CD8-positive, alpha-beta memory T cell (primary cell): ENCODE measurements at regions of chr1 and their contacts with region 1.

Region 1: GRCh38 chr1:181033799-181034451 is at the start of gene MR1:
- DNase-seq: peak; percentile 2 to 87 (median 66)
- H3K4me3 ChIP-seq: peak within 1 kb of the TSS; percentile 81
- H3K4me3 Mint-ChIP-seq: peak within 1 kb of the TSS; percentile 90 to 99 (median 97)
- H3K27ac ChIP-seq: peak within 1 kb of the TSS; percentile 87
- H3K27ac Mint-ChIP-seq: peak within 1 kb of the TSS; percentile 97 to 100 (median 99)
- H3K4me1 ChIP-seq: peaks cover 53% of the 10 kb centered on the region
- H3K4me1 Mint-ChIP-seq: peaks cover 50 to 65% (median 65%) of the 10 kb centered on the region in 3 donors
- H3K27me3 ChIP-seq: no peaks in the 10 kb centered on the region
- H3K27me3 Mint-ChIP-seq: no peaks in the 10 kb centered on the region
- total RNA-seq, gene MR1: 13.8 to 16.4 TPM

Region 2: DNA sequence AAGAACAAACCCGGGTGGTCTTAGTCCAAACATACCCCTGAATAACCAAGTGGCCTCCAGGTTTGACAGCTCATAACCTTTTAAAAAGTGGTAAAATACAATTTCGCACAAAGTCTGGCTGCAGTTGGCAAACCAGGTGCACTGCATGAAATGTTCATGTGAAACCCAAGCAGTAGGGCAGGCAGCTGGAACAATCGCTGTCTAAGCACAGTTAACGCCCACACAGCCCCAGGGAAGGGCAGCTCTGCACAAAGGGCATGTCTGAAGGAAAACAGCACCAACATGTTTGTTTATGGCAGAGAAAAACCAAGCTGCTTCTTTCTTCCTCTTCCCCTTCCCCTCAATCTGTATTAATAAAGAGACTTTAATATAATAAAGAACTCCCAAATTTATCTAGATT is 71.7 kb before region 1 on chr1:
- CTCF ChIA-PET with region 1: no interaction called
- POLR2A ChIA-PET with region 1: no interaction called
- DNase-seq: no peak
- H3K4me3 ChIP-seq: no peak overlapping the region
- H3K4me3 Mint-ChIP-seq: no peak overlapping the region
- H3K27ac ChIP-seq: no peak overlapping the region
- H3K27ac Mint-ChIP-seq: no peak overlapping the region
- H3K4me1 ChIP-seq: no peaks in the 10 kb centered on the region
- H3K4me1 Mint-ChIP-seq: peaks cover 0 to 6% (median 0%) of the 10 kb centered on the region in 3 donors
- H3K27me3 ChIP-seq: no peaks in the 10 kb centered on the region
- H3K27me3 Mint-ChIP-seq: peaks cover 0 to 1% of the 10 kb centered on the region in 2 donors

Region 3: GRCh38 chr1:180975551-180975950 is 58.4 kb before region 1 on chr1:
- CTCF ChIA-PET with region 1: no interaction called
- POLR2A ChIA-PET with region 1: no interaction called
- DNase-seq: no peak
- H3K4me3 ChIP-seq: no peak overlapping the region
- H3K4me3 Mint-ChIP-seq: peak overlapping the region in 1 of 7 donors; percentile 12
- H3K27ac ChIP-seq: no peak overlapping the region
- H3K27ac Mint-ChIP-seq: peak overlapping the region in 6 of 8 donors; percentile 30 to 64 (median 40)
- H3K4me1 ChIP-seq: peaks cover 10% of the 10 kb centered on the region
- H3K4me1 Mint-ChIP-seq: peaks cover 32 to 48% (median 39%) of the 10 kb centered on the region in 3 donors
- H3K27me3 ChIP-seq: no peaks in the 10 kb centered on the region
- H3K27me3 Mint-ChIP-seq: no peaks in the 10 kb centered on the region

Region 4: DNA sequence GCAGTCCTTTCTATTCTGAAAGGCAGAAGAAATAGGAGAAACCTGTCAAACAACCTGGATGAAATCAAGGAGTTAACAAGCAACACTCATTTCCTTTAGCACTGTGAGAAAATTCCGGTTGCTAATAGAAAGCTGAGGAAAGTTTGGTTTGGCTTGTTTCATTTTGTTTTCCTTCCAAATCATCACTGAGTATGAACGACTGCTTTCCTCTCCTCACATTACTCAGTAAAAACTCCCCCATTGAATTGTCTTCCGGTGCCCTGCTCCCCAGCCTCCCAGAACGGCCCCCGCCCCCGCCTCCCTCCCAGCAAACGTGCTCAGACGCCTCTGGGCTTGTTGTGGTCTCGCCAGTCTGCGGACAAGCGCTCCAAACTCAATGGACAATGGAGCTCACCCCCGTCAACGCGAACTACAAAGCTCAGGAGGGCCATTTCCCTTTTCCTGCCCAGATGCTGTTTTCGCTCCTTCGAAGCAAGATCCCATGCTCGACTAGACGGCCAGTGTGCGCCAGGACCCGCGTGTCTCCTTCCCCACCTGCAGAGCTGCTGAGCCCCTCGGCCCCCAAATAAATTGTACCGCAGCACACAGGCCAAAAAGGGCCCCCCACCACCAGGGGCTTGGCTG is 12.0 kb before region 1 on chr1:
- CTCF ChIA-PET with region 1: interaction called, 14 read pairs
- POLR2A ChIA-PET with region 1: interaction called, 25 read pairs
- DNase-seq: peak; percentile 37 to 73 (median 51)
- H3K4me3 ChIP-seq: peak overlapping the region; percentile 85
- H3K4me3 Mint-ChIP-seq: peak overlapping the region; percentile 95 to 99 (median 96)
- H3K27ac ChIP-seq: peak overlapping the region; percentile 79
- H3K27ac Mint-ChIP-seq: peak overlapping the region; percentile 92 to 99 (median 96)
- H3K4me1 ChIP-seq: peaks cover 40% of the 10 kb centered on the region
- H3K4me1 Mint-ChIP-seq: peaks cover 44 to 54% (median 50%) of the 10 kb centered on the region in 3 donors
- H3K27me3 ChIP-seq: no peaks in the 10 kb centered on the region
- H3K27me3 Mint-ChIP-seq: peaks cover 10 to 18% of the 10 kb centered on the region in 2 donors

Region 5: DNA sequence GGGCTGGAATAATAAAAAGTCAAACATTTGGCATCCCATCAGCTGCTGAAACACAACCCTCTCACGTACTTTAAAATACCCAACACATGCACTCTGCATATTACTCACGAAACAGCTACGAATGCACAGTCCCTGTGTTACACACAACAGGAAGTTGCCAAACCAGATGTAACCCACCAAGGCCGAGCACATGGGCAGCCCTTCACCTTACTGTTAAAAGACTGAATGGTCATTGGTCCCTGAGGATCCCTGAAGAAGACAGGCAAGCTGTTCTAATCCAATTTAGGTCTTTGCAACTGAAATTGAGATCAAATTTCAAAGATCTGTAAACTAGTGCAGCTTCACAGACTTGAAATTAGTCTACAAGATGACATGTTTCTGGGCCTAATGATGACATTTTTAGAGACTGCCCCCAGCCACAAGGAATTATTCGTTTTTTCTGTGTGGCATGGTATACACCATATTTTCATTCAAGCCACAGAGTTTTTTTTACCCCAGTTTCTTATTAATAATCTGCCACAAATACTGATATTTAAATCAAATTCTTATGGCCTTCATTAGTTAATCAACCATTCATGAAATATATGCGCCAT is 29.0 kb after region 1 on chr1:
- CTCF ChIA-PET with region 1: interaction called, 21 read pairs
- POLR2A ChIA-PET with region 1: no interaction called
- DNase-seq: peak in 4 of 5 donors; percentile 2 to 50 (median 23)
- H3K4me3 ChIP-seq: no peak overlapping the region
- H3K4me3 Mint-ChIP-seq: peak overlapping the region; percentile 40 to 88 (median 80)
- H3K27ac ChIP-seq: no peak overlapping the region
- H3K27ac Mint-ChIP-seq: peak overlapping the region; percentile 75 to 99 (median 91)
- H3K4me1 ChIP-seq: peaks cover 8% of the 10 kb centered on the region
- H3K4me1 Mint-ChIP-seq: peaks cover 22 to 28% (median 27%) of the 10 kb centered on the region in 3 donors
- H3K27me3 ChIP-seq: no peaks in the 10 kb centered on the region
- H3K27me3 Mint-ChIP-seq: peaks cover 0 to 3% of the 10 kb centered on the region in 2 donors

Region 6: GRCh38 chr1:181105134-181106021 is 71.5 kb after region 1 on chr1:
- CTCF ChIA-PET with region 1: interaction called, 12 read pairs
- POLR2A ChIA-PET with region 1: interaction called, 4 read pairs
- DNase-seq: peak; percentile 86 to 97 (median 92)
- H3K4me3 ChIP-seq: peak overlapping the region; percentile 52
- H3K4me3 Mint-ChIP-seq: peak overlapping the region; percentile 84 to 93 (median 89)
- H3K27ac ChIP-seq: peak overlapping the region; percentile 82
- H3K27ac Mint-ChIP-seq: peak overlapping the region; percentile 92 to 99 (median 96)
- H3K4me1 ChIP-seq: peaks cover 39% of the 10 kb centered on the region
- H3K4me1 Mint-ChIP-seq: peaks cover 26 to 46% (median 41%) of the 10 kb centered on the region in 3 donors
- H3K27me3 ChIP-seq: no peaks in the 10 kb centered on the region
- H3K27me3 Mint-ChIP-seq: peaks cover 4 to 7% of the 10 kb centered on the region in 2 donors